HEK293 (cell line): ENCODE measurements at regions of chr2 and their contacts with region 1.

Region 1: GRCh38 chr2:169584005-169584877 is at the start of gene PPIG:
- H3K4me3 ChIP-seq: peak within 1 kb of the TSS; percentile 93
- H3K27ac ChIP-seq: peak within 1 kb of the TSS; percentile 74
- H3K4me1 ChIP-seq: no peaks in the 10 kb centered on the region
- CTCF ChIP-seq: no peak; the same call in 1 of the 2 replicates

Region 2: GRCh38 chr2:169573160-169573973 is 10.9 kb before region 1 on chr2 and contains the start of gene FASTKD1:
- CTCF ChIA-PET with region 1: no interaction called
- POLR2A ChIA-PET with region 1: interaction called, 23 read pairs
- H3K4me3 ChIP-seq: peak within 1 kb of the TSS; percentile 74
- H3K27ac ChIP-seq: peak within 1 kb of the TSS; percentile 24
- H3K4me1 ChIP-seq: no peaks in the 10 kb centered on the region
- CTCF ChIP-seq: no peak

Region 3: DNA sequence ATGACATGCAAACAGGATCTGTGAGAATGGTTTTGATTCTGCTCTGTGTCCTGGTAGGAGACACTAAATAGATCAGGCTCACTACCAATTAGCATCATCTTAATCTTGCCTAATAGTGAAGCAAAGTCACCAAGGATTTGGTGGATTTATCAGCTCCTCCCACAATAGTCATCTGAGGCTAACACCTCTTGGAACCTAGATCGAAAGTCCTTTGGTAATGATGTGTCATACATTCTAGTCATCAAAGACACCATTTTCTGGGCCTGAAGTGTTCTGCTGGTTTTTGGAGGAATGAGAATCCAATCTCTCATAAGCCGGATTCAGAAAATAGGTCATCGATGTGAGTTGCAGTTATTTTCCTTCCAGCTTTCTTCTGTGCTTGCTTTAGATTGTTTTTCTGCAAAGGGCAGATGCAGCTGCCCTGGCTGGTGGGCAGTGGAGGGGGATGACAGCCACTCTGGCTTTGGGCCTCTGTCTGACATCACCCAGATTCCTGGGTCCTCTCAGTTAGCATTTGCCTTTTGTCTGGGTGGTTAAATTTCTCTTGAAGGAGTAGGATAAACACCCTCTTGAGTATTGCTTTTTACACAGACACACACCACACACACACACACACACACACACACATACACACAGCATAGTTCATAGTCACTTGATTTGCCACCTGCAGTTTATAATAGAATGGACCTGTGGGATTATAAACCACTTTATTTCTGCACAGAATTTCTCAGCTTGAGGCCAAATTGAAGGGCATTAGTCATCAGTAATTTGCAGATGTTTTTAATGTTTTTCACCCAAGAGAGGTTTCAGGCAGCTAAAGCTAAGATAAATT is 593.9 kb after region 1 on chr2 and contains the start of gene MYO3B:
- CTCF ChIA-PET with region 1: no interaction called
- POLR2A ChIA-PET with region 1: no interaction called
- H3K4me3 ChIP-seq: no peak within 1 kb of the TSS
- H3K27ac ChIP-seq: no peak within 1 kb of the TSS
- H3K4me1 ChIP-seq: peaks cover 4% of the 10 kb centered on the region; the same call in 1 of the 2 replicates
- CTCF ChIP-seq: no peak